Right cardiac atrium (tissue), 5 donors: ENCODE measurements at regions of chr1 and their contacts with region 1.

Region 1: GRCh38 chr1:43529206-43529731 is 1.4 kb upstream of the PTPRF start:
- DNase-seq: peak; percentile 79 to 93 (median 92)
- ATAC-seq: peak; percentile 50 to 66
- H3K4me3 ChIP-seq: no peak overlapping the region
- H3K27ac ChIP-seq: no peak overlapping the region
- H3K4me1 ChIP-seq: no peaks in the 10 kb centered on the region
- H3K27me3 ChIP-seq: no peaks in the 10 kb centered on the region

Region 2: GRCh38 chr1:43582162-43582589 is 52.9 kb after region 1 on chr1:
- intact Hi-C with region 1: no loop called
- DNase-seq: no peak
- ATAC-seq: peak; percentile 34 to 41
- H3K4me3 ChIP-seq: no peak overlapping the region
- H3K27ac ChIP-seq: no peak overlapping the region
- H3K4me1 ChIP-seq: no peaks in the 10 kb centered on the region
- H3K27me3 ChIP-seq: no peaks in the 10 kb centered on the region

Region 3: GRCh38 chr1:43650310-43651085 is 121.2 kb after region 1 on chr1:
- intact Hi-C with region 1: loop called in 3 of 4 experiments (anchors 2 to 10 kb)
- DNase-seq: peak; percentile 95 to 97 (median 96)
- ATAC-seq: peak; percentile 93 to 95
- H3K4me3 ChIP-seq: peak overlapping the region; percentile 93
- H3K27ac ChIP-seq: peak overlapping the region; percentile 100
- H3K4me1 ChIP-seq: peaks cover 5% of the 10 kb centered on the region
- H3K27me3 ChIP-seq: no peaks in the 10 kb centered on the region

Region 4: GRCh38 chr1:43844114-43844513 is 314.8 kb after region 1 on chr1:
- intact Hi-C with region 1: no loop called
- DNase-seq: no peak
- ATAC-seq: no peak
- H3K4me3 ChIP-seq: no peak overlapping the region
- H3K27ac ChIP-seq: no peak overlapping the region
- H3K4me1 ChIP-seq: no peaks in the 10 kb centered on the region
- H3K27me3 ChIP-seq: no peaks in the 10 kb centered on the region

Region 5: GRCh38 chr1:43934101-43934985 is 405.1 kb after region 1 on chr1:
- intact Hi-C with region 1: loop called in 1 of 4 experiments (anchors 5 kb)
- DNase-seq: peak in 2 of 3 donors; percentile 80 to 81
- ATAC-seq: peak; percentile 31 to 53
- H3K4me3 ChIP-seq: no peak overlapping the region
- H3K27ac ChIP-seq: no peak overlapping the region
- H3K4me1 ChIP-seq: peaks cover 4% of the 10 kb centered on the region
- H3K27me3 ChIP-seq: no peaks in the 10 kb centered on the region

Region 6: DNA sequence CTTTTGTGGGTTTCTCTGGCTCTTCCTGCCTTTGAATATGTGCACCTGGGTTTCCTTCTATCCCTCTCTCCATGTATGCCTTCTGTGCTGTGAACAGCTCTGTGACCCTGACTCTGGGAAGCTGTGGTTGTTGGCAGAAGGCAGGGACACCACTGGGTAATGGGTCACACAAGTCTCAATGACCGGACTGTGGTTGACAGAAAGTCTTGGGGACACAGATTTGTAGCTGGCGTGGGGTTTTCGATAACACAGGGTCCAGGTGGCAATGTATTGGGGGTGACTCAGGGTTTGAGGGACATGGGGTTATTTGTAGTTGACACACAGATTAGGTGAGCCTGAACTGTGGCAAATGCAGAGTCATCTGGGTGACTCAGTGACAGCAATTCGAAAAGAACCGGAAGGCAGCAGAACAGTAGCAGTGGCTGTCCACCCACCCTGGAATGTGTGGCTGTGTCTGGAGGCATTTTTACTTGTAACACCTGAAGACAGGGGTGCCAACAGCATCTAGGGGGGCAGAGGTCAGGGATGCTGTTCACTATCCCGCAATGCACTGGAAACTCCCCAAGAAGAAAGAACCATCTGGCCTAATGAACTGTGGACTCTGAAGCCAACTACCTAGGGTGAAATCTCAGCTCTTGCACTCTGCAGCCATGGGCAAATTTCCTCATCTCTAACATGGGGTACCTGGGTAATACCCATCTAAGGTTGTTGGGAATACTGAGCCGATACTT is 515.0 kb after region 1 on chr1:
- intact Hi-C with region 1: loop called in 1 of 4 experiments (anchors 5 kb)
- DNase-seq: no peak
- ATAC-seq: no peak
- H3K4me3 ChIP-seq: no peak overlapping the region
- H3K27ac ChIP-seq: no peak overlapping the region
- H3K4me1 ChIP-seq: no peaks in the 10 kb centered on the region
- H3K27me3 ChIP-seq: no peaks in the 10 kb centered on the region